Heart left ventricle (tissue), 16 donors: ENCODE measurements at regions of chr3 and their contacts with region 1.

Region 1: GRCh38 chr3:146160964-146161662 is at the start of gene PLOD2:
- DNase-seq: peak; percentile 73 to 91 (median 89)
- ATAC-seq: peak; percentile 45 to 91 (median 80)
- H3K4me3 ChIP-seq: peak within 1 kb of the TSS; percentile 72 to 94 (median 79)
- H3K27ac ChIP-seq: peak within 1 kb of the TSS; percentile 75 to 97 (median 92)
- H3K4me1 ChIP-seq: peaks cover 6 to 64% (median 42%) of the 10 kb centered on the region in 12 donors
- H3K27me3 ChIP-seq: peaks cover 0 to 12% (median 0%) of the 10 kb centered on the region in 9 donors
- CTCF ChIP-seq: no peak
- POLR2A ChIP-seq: peak in 1 of 2 donors; percentile 84
- total RNA-seq, gene PLOD2: 6.8 to 33.0 (median 17.9) TPM

Region 2: GRCh38 chr3:146072824-146073223 is 88.3 kb before region 1 on chr3:
- intact Hi-C with region 1: loop called in 8 of 10 experiments (anchors 2 to 5 kb)
- DNase-seq: no peak
- ATAC-seq: peak in 3 of 4 donors; percentile 57 to 77 (median 73)
- H3K4me3 ChIP-seq: no peak overlapping the region
- H3K27ac ChIP-seq: peak overlapping the region in 2 of 12 donors; percentile 6 to 9
- H3K4me1 ChIP-seq: peaks cover 0 to 21% (median 3%) of the 10 kb centered on the region in 12 donors
- H3K27me3 ChIP-seq: no peaks in the 10 kb centered on the region
- CTCF ChIP-seq: no peak
- POLR2A ChIP-seq: no peak

Region 3: GRCh38 chr3:146093932-146094583 is 67.1 kb before region 1 on chr3:
- intact Hi-C with region 1: loop called in 1 of 10 experiments (anchors 5 kb)
- DNase-seq: peak in 1 of 5 donors; percentile 27
- ATAC-seq: peak in 3 of 4 donors; percentile 50 to 73 (median 57)
- H3K4me3 ChIP-seq: no peak overlapping the region
- H3K27ac ChIP-seq: peak overlapping the region in 1 of 12 donors; percentile 9
- H3K4me1 ChIP-seq: peaks cover 0 to 31% (median 9%) of the 10 kb centered on the region in 12 donors
- H3K27me3 ChIP-seq: no peaks in the 10 kb centered on the region
- CTCF ChIP-seq: no peak
- POLR2A ChIP-seq: no peak

Region 4: DNA sequence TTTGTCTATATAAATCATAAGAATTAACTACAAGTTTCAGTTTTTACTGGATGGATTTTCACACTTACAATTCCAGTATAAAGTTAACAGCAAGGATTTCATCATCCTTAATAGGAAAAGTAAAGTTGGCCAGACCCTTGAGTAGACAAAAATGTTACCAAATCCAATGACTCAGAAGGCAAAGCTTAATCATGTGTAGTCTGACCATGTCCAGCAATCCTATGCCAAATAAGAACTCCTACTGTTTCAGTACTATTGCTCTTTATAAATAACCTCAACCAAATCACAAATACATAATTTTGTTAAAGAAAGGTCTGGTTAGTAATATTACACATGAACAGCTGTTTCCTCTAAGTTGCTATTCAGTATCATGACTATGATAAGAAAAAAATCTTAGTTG is 35.2 kb before region 1 on chr3:
- intact Hi-C with region 1: loop called in 1 of 10 experiments (anchors 5 kb)
- DNase-seq: no peak
- ATAC-seq: peak in 3 of 4 donors; percentile 81 to 90 (median 87)
- H3K4me3 ChIP-seq: no peak overlapping the region
- H3K27ac ChIP-seq: peak overlapping the region in 7 of 12 donors; percentile 10 to 63 (median 38)
- H3K4me1 ChIP-seq: peaks cover 0 to 38% (median 6%) of the 10 kb centered on the region in 12 donors
- H3K27me3 ChIP-seq: no peaks in the 10 kb centered on the region
- CTCF ChIP-seq: no peak
- POLR2A ChIP-seq: no peak